ENCODE measurements at regions of chr12 and their contacts with region 1.

Region 1: GRCh38 chr12:55681142-55682077 is 26.3 kb downstream of the ITGA7 start:
- DNase-seq: peak; percentile 61 to 83
- H3K4me3 ChIP-seq: peak overlapping the region in 3 of 4 experiments; percentile 6 to 44 (median 21); a peak in 5 of 8 replicates
- H3K27ac ChIP-seq: no peak overlapping the region
- H3K4me1 ChIP-seq: peaks cover 0 to 12% (median 5%) of the 10 kb centered on the region in 4 experiments; a peak in 4 of 7 replicates
- H3K27me3 ChIP-seq: no peaks in the 10 kb centered on the region
- CTCF ChIP-seq: peak; percentile 60 to 68 (median 61)
- EP300 ChIP-seq: no peak
- POLR2A ChIP-seq: peak in 1 of 2 experiments; percentile 54; a peak in 2 of 3 replicates
- RAD21 ChIP-seq: peak; percentile 25 to 48; a peak in 3 of 4 replicates

Region 2: DNA sequence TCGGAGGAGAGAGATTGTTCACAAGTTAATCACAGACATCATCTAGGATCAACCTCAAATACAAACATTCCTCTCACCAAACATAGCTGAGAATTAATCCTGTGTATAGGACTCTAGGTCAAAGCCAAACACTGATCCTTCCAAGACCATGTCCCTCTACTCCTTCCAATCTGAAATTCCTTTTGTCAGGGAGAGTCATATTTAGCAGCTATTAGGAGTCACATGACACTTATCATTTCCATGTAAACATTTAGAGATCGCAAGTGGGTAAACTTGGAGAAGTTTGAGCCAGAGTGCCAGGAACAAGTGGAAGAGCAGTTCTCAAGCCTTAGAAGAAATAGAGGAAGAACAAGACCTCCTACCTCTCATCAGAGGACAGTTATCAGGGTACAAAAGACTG is 95.6 kb before region 1 on chr12:
- CTCF ChIA-PET with region 1: no interaction called
- POLR2A ChIA-PET with region 1: no interaction called
- DNase-seq: no peak
- H3K4me3 ChIP-seq: no peak overlapping the region
- H3K27ac ChIP-seq: no peak overlapping the region
- H3K4me1 ChIP-seq: no peaks in the 10 kb centered on the region
- H3K27me3 ChIP-seq: no peaks in the 10 kb centered on the region
- CTCF ChIP-seq: no peak
- EP300 ChIP-seq: no peak
- POLR2A ChIP-seq: no peak
- RAD21 ChIP-seq: no peak

Region 3: GRCh38 chr12:55610598-55610997 is 70.8 kb before region 1 on chr12:
- CTCF ChIA-PET with region 1: no interaction called
- POLR2A ChIA-PET with region 1: no interaction called
- DNase-seq: no peak
- H3K4me3 ChIP-seq: no peak overlapping the region
- H3K27ac ChIP-seq: no peak overlapping the region
- H3K4me1 ChIP-seq: no peaks in the 10 kb centered on the region
- H3K27me3 ChIP-seq: no peaks in the 10 kb centered on the region
- CTCF ChIP-seq: no peak
- EP300 ChIP-seq: no peak
- POLR2A ChIP-seq: no peak
- RAD21 ChIP-seq: no peak

Region 4: GRCh38 chr12:55654511-55655214 is 26.7 kb before region 1 on chr12:
- CTCF ChIA-PET with region 1: interaction called, 13 read pairs
- POLR2A ChIA-PET with region 1: interaction called, 4 read pairs
- DNase-seq: no peak
- H3K4me3 ChIP-seq: no peak overlapping the region
- H3K27ac ChIP-seq: no peak overlapping the region
- H3K4me1 ChIP-seq: peaks cover 0 to 2% (median 0%) of the 10 kb centered on the region in 4 experiments; a peak in 1 of 7 replicates
- H3K27me3 ChIP-seq: no peaks in the 10 kb centered on the region; a peak in 2 of 7 replicates
- CTCF ChIP-seq: no peak
- EP300 ChIP-seq: no peak
- POLR2A ChIP-seq: no peak
- RAD21 ChIP-seq: no peak

Region 5: GRCh38 chr12:55700255-55701018 is 19.0 kb after region 1 on chr12:
- CTCF ChIA-PET with region 1: interaction called, 34 read pairs
- POLR2A ChIA-PET with region 1: interaction called, 8 read pairs
- DNase-seq: no peak
- H3K4me3 ChIP-seq: no peak overlapping the region
- H3K27ac ChIP-seq: no peak overlapping the region
- H3K4me1 ChIP-seq: no peaks in the 10 kb centered on the region; a peak in 1 of 7 replicates
- H3K27me3 ChIP-seq: no peaks in the 10 kb centered on the region
- CTCF ChIP-seq: no peak
- EP300 ChIP-seq: no peak
- POLR2A ChIP-seq: no peak
- RAD21 ChIP-seq: no peak

Region 6: DNA sequence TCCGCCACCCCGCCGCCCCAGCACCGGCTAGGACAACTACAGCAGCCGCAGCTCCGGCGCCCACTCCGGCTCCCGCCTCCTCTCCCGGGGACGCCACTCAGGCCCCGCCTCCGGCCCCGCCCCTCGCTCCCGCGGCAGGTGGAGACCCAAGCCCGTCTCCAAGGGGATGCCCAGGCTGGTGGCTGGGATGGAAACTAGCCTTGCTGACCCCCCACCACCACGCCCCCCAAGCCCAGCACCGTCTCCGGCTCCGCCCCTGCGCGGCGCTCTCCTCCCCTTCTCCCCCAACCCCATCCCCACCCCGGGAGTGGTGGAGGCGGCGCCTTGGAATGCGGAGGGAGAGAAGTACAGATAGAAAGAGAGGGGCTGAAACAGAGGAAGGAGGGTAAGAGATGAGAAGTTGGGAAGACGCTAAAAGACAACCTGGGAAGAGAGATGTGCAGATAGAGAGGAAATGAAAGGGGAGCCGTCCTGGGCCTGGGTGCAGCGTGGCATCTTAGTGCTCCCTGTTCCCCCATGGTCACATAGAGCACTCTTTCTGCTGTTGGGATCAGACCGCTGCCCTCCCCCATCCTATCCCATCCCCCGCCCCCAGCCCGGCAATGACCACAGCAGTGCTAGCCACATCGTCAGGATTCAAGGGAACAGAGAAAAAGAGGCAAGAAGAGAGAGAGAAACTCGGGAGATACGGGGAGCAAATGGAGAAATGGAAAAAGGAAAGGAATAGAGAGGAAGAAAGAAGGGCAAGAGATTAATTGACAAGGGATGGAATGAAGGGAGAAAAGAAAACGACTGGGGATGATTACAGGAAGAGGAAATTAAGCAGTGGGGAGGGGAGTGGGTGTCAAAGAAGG is 26.7 kb after region 1 on chr12 and contains the start of gene ITGA7:
- CTCF ChIA-PET with region 1: interaction called, 34 read pairs
- POLR2A ChIA-PET with region 1: interaction called, 10 read pairs
- DNase-seq: peak; percentile 83 to 99
- H3K4me3 ChIP-seq: peak within 1 kb of the TSS; percentile 83 to 88 (median 86)
- H3K27ac ChIP-seq: 0 out of 2 replicates have a peak within 1 kb of the TSS, but pooled peaks have one; percentile 54
- H3K4me1 ChIP-seq: peaks cover 0 to 25% (median 8%) of the 10 kb centered on the region in 4 experiments; a peak in 5 of 7 replicates
- H3K27me3 ChIP-seq: peaks cover 0 to 3% (median 0%) of the 10 kb centered on the region in 4 experiments; a peak in 5 of 7 replicates
- CTCF ChIP-seq: no peak
- EP300 ChIP-seq: no peak
- POLR2A ChIP-seq: no peak
- RAD21 ChIP-seq: no peak
- total RNA-seq, gene ITGA7: 76.4 and 86.1 TPM in 2 replicates

Region 7: DNA sequence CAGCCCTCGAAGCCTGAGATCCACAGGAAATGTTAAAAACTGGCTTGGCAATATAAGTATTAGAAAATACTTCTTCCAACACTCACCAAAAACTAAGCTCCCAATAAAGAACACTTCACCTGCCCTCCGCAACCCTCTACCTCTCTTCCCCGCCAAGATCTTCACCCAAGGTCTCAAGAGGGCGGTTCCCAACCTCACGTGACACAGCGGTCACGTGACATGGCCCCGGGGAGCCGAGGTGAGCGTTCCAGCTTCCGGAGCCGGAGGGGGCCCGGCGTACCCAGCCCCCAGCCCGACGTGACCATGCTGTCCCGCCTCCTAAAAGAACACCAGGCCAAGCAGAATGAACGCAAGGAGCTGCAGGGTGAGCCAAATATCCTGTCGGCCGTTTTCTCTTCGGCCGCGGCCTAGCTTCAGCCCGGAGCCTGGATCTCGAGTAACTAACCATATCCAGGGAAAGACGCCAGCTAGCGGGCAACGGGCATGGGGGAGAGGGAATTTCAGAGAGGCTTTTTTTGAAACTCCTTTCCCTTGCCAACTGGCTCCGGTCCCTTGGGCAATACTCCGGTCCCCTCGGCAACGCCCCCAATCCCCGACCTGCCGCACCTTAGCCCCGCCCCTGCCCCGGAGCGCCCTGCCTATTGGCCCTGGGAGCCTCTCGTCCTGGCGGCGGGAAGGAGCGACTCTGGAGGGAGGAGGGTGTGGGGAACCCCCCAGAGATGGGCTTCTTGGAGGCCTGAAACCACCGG is 34.6 kb after region 1 on chr12 and contains the start of gene BLOC1S1:
- CTCF ChIA-PET with region 1: interaction called, 30 read pairs
- POLR2A ChIA-PET with region 1: interaction called, 5 read pairs
- DNase-seq: peak in 1 of 2 experiments; percentile 98
- H3K4me3 ChIP-seq: peak within 1 kb of the TSS; percentile 77 to 95 (median 87)
- H3K27ac ChIP-seq: peak within 1 kb of the TSS; percentile 63
- H3K4me1 ChIP-seq: peaks cover 10 to 26% (median 19%) of the 10 kb centered on the region in 4 experiments
- H3K27me3 ChIP-seq: no peaks in the 10 kb centered on the region; a peak in 2 of 7 replicates
- CTCF ChIP-seq: no peak
- EP300 ChIP-seq: peak in 1 of 2 experiments; percentile 85; a peak in 1 of 3 replicates
- POLR2A ChIP-seq: peak; percentile 2 to 64
- RAD21 ChIP-seq: no peak
- total RNA-seq, gene BLOC1S1: 84.3 and 91.1 TPM in 2 replicates

Region 8: GRCh38 chr12:55865327-55865726 is 183.9 kb after region 1 on chr12:
- CTCF ChIA-PET with region 1: no interaction called
- POLR2A ChIA-PET with region 1: no interaction called
- DNase-seq: no peak
- H3K4me3 ChIP-seq: no peak overlapping the region
- H3K27ac ChIP-seq: no peak overlapping the region
- H3K4me1 ChIP-seq: no peaks in the 10 kb centered on the region
- H3K27me3 ChIP-seq: no peaks in the 10 kb centered on the region
- CTCF ChIP-seq: no peak
- EP300 ChIP-seq: no peak
- POLR2A ChIP-seq: no peak
- RAD21 ChIP-seq: no peak